ENCODE measurements at regions of chr9 and their contacts with region 1.

Region 1: DNA sequence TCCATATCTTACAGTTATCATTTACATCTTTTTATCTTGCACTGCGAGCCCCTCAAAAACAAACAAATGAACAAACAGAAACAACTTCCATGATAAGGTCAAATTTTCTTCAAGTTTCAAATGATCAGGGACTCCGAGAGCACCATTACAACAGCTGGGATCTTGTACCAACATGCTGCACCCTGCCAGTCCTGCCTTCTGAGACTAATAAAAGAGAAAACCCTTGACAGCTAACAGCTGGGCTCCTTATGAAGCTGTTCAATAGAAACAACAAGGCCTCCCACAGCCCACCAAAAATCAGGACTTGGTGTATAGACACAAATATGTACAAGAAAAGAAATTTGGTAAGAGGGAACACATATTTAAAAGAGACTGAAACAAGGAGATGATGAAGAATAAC is 985.3 kb upstream of the DMAC1 start:
- DNase-seq: no peak
- H3K4me3 Mint-ChIP-seq: no peak overlapping the region
- H3K27ac Mint-ChIP-seq: no peak overlapping the region
- H3K4me1 Mint-ChIP-seq: no peaks in the 10 kb centered on the region
- H3K27me3 Mint-ChIP-seq: no peaks in the 10 kb centered on the region

Region 2: DNA sequence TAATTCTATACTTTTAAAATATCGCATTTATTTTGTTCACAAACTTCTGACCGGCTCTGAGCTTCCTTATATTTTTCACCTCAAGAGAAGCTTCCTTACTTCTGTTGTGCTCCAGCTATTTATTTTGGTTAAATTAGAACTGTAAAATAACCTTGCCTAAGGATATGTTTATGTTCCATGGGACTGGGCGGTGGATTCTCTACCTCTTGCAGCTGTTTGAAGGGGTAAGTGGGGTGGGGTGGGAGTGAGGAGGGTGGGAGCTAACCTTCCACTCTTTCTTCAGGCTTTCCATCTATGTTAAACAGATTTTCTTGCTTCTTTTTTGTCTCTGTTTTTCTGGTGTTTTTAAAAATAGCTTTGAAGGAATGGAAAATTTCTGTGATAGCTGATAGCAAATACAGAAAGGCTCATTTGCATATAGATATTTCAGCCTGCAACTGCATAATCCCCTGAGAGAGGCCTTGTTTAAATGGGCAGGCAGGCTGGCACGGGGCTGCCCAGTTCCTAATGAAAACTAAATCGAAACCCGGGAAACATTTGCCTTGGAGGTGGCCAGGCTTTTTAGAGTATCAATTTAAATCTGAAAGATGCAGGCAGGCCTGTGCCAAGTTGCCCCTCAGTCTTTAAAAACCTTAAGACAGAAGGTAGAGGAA is 863.2 kb before region 1 on chr9:
- intact Hi-C with region 1: no loop called
- DNase-seq: no peak
- H3K4me3 Mint-ChIP-seq: no peak overlapping the region
- H3K27ac Mint-ChIP-seq: no peak overlapping the region
- H3K4me1 Mint-ChIP-seq: no peaks in the 10 kb centered on the region
- H3K27me3 Mint-ChIP-seq: no peaks in the 10 kb centered on the region

Region 3: DNA sequence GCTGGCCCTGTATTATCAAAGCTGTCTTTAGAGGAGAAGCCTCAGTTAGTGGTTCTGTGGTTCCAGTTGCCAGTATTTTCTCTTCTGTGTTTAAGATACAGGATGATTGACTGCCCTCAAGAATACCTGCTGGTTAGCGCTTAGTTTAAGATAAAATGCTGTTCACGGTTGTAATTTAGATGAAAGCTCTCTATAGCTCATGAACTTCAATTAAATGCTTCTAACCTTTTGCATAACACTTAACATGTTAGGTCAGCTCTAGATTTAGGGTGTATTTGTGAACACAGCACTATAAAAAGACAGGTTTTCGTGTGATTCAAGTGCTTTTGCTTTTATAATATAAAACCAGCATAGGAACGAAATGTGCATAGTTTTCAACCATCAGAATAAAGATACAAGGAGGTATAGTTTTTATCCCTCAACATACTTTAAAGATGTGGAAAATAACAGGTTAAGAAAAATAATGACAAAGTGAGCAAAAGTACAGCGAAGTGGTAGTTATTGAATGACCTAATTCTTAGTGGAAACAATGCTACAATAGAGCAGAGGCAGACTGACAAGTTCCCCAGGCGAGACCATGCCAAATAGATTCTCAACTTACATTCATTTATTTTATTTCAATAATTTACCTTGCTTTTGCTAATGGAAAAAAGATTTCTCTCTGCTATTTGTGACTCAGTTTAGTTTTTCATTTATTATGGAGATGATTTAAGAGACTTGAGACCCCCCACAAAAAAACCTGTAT is 382.7 kb before region 1 on chr9:
- intact Hi-C with region 1: no loop called
- DNase-seq: no peak
- H3K4me3 Mint-ChIP-seq: no peak overlapping the region
- H3K27ac Mint-ChIP-seq: no peak overlapping the region
- H3K4me1 Mint-ChIP-seq: no peaks in the 10 kb centered on the region
- H3K27me3 Mint-ChIP-seq: no peaks in the 10 kb centered on the region

Region 4: GRCh38 chr9:9862235-9862810 is 1077.5 kb after region 1 on chr9:
- intact Hi-C with region 1: loop called (anchors 5 kb)
- DNase-seq: no peak
- H3K4me3 Mint-ChIP-seq: no peak overlapping the region
- H3K27ac Mint-ChIP-seq: no peak overlapping the region
- H3K4me1 Mint-ChIP-seq: peaks cover 4% of the 10 kb centered on the region
- H3K27me3 Mint-ChIP-seq: no peaks in the 10 kb centered on the region